Activated CD4-positive, alpha-beta memory T cell treated with anti-CD3 and anti-CD28 coated beads for 36 hours (primary cell): ENCODE measurements at regions of chr1 and their contacts with region 1.

Region 1: GRCh38 chr1:91803847-91804545 is 82.0 kb downstream of the TGFBR3 start:
- DNase-seq: peak; percentile 86
- H3K4me3 Mint-ChIP-seq: peak overlapping the region; percentile 68
- H3K27ac Mint-ChIP-seq: peak overlapping the region; percentile 92
- H3K4me1 Mint-ChIP-seq: peaks cover 40% of the 10 kb centered on the region
- H3K27me3 Mint-ChIP-seq: peaks cover 3% of the 10 kb centered on the region

Region 2: GRCh38 chr1:91021686-91022517 is 782.1 kb before region 1 on chr1 and contains the start of gene ZNF644:
- CTCF ChIA-PET with region 1: no interaction called
- POLR2A ChIA-PET with region 1: no interaction called
- intact Hi-C with region 1: loop called (anchors 2 kb)
- DNase-seq: peak; percentile 96
- H3K4me3 Mint-ChIP-seq: peak within 1 kb of the TSS; percentile 98
- H3K27ac Mint-ChIP-seq: peak within 1 kb of the TSS; percentile 99
- H3K4me1 Mint-ChIP-seq: peaks cover 63% of the 10 kb centered on the region
- H3K27me3 Mint-ChIP-seq: no peaks in the 10 kb centered on the region
- total RNA-seq, gene ZNF644: 37.5 to 42.5 TPM

Region 3: DNA sequence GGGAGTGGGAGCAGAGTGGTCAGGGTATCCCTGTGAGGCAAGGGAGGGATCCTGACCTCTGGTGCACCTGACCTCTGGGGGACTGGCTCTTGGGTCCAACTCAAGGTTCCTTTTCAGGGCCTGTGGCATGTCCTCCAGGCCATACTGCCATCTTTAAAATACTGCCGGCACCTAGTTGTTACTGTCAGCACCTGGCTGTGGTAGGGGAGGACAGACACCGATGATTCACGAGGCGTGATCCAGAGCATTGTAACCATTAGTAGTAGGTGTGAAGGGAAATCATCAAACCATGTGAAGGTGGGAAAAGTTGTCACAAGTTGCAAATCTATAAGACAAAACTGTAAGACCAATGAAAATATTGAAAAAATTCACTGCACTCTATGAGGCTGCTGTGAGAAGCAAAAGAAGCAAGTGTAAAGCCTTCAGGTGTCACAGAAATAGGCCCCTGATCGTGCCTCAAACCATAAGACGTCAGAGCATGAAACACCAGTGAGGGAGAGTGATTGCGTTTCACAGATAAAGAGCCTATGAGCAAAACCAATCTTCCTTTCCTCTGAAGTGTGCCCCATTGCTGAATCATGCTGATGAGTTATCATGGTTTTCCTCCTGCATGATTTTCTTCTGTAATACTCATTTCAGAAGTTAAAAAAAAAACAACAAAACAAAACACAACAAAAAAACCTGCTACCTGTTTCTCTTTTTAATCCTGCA is 248.0 kb before region 1 on chr1:
- CTCF ChIA-PET with region 1: interaction called, 3 read pairs
- POLR2A ChIA-PET with region 1: interaction called, 3 read pairs
- intact Hi-C with region 1: loop called (anchors 1 kb)
- DNase-seq: peak; percentile 79
- H3K4me3 Mint-ChIP-seq: peak overlapping the region; percentile 51
- H3K27ac Mint-ChIP-seq: peak overlapping the region; percentile 91
- H3K4me1 Mint-ChIP-seq: peaks cover 87% of the 10 kb centered on the region
- H3K27me3 Mint-ChIP-seq: no peaks in the 10 kb centered on the region

Region 4: GRCh38 chr1:91712981-91713841 is 90.8 kb before region 1 on chr1:
- CTCF ChIA-PET with region 1: no interaction called
- POLR2A ChIA-PET with region 1: interaction called, 4 read pairs
- intact Hi-C with region 1: loop called (anchors 1 kb)
- DNase-seq: peak; percentile 77
- H3K4me3 Mint-ChIP-seq: peak overlapping the region; percentile 24
- H3K27ac Mint-ChIP-seq: peak overlapping the region; percentile 71
- H3K4me1 Mint-ChIP-seq: peaks cover 25% of the 10 kb centered on the region
- H3K27me3 Mint-ChIP-seq: no peaks in the 10 kb centered on the region

Region 5: GRCh38 chr1:91876040-91876470 is 72.1 kb after region 1 on chr1:
- CTCF ChIA-PET with region 1: interaction called, 4 read pairs
- POLR2A ChIA-PET with region 1: interaction called, 4 read pairs
- intact Hi-C with region 1: loop called (anchors 1 kb)
- DNase-seq: peak; percentile 64
- H3K4me3 Mint-ChIP-seq: no peak overlapping the region
- H3K27ac Mint-ChIP-seq: peak overlapping the region; percentile 18
- H3K4me1 Mint-ChIP-seq: peaks cover 75% of the 10 kb centered on the region
- H3K27me3 Mint-ChIP-seq: no peaks in the 10 kb centered on the region

Region 6: DNA sequence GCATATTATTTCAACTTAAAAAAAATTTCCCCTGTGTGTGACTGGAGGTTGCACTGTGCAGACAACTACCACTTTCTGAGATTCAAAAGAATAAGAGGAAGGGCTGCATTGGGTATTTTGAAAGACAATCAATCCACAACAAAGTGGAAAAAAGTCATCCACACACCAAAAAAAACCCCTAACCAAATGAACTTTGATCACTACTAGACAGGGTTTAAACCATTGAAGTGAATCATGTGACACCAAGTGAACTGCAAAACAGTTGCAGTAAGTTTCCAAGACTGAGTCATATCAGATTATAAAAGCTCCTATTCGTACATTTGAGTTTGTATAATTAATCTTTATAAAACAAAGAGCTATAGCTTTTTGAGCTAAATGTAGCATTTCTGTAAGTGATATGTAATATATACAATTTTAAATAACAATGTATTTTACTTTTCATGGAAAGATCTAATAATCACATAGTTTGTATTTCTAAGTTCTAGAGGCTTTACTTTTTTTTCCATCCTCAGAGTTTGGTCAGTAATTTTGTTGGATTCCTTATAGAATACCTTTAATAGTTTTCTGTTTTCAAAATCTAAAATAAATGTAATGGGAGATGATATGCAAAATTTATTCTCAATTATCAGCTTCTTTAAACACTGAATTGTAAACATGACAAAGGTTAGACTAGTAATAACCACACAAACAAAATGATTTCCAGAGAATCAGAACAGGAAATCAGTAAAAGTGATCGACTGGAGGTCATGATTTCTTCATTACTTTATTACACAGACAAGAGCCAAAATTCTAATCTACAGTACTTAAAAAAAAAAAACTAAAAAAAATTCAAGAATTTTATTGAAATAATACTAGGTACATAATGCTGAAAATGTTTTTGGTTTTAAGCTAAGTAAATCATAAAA is 733.2 kb after region 1 on chr1:
- CTCF ChIA-PET with region 1: no interaction called
- POLR2A ChIA-PET with region 1: no interaction called
- intact Hi-C with region 1: loop called (anchors 1 kb)
- DNase-seq: no peak
- H3K4me3 Mint-ChIP-seq: peak overlapping the region; percentile 54
- H3K27ac Mint-ChIP-seq: peak overlapping the region; percentile 98
- H3K4me1 Mint-ChIP-seq: peaks cover 86% of the 10 kb centered on the region
- H3K27me3 Mint-ChIP-seq: no peaks in the 10 kb centered on the region